ENCODE measurements at regions of chr17 and their contacts with region 1.

Region 1: DNA sequence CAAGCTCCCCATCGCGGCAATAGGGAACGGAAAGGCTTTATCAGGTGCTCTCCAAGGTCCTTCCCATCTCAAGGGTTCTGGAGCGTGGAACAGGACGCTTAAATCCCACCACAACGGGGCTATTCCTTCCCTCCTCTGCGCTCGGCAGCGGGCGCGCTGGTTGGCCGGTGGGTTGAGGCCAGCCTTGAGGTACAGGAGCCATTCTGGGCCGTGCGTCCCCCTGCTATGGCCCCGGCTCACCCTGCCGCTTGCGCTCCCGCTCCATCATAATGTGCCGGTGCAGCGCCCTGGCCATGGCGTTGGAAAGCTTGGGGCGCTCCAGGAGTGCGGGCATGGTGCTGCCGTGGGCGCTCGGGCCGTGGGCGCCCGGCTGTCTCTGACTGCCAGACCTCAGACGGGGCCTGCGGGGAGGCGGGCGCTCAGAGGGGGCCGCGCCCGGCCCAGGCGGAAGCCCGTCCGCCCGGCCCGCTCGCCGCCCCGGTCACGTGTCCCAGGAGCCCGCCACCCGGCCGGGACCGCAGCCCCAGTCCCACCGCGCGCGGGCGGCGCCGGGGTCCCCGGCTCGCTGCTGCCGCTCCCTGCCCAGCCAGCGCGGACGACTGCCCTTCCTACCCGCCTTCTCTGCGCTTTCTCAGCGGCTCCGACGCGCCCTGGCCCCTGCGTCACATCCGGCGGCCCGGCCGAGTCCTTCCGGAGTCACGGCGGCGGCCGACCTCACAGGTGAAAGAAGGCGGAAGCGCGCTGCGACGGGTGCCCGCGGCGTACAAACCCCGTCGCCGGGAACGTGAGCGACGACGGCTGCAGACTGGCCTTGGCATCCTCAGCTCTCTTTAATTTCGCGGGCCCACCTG is at the start of gene GPS2:
- DNase-seq: peak in 1 of 2 experiments; percentile 96
- H3K4me3 ChIP-seq: peak within 1 kb of the TSS; percentile 55 to 95 (median 70)
- H3K27ac ChIP-seq: peak within 1 kb of the TSS; percentile 61; the same call in 1 of the 2 replicates
- H3K4me1 ChIP-seq: peaks cover 0 to 7% (median 4%) of the 10 kb centered on the region in 4 experiments; a peak in 4 of 7 replicates
- H3K27me3 ChIP-seq: no peaks in the 10 kb centered on the region
- CTCF ChIP-seq: no peak
- EP300 ChIP-seq: peak in 1 of 2 experiments; percentile 84; a peak in 1 of 3 replicates
- POLR2A ChIP-seq: peak in 1 of 2 experiments; percentile 87; a peak in 2 of 3 replicates
- RAD21 ChIP-seq: no peak
- total RNA-seq, gene GPS2: 67.0 and 74.8 TPM in 2 replicates

Region 2: DNA sequence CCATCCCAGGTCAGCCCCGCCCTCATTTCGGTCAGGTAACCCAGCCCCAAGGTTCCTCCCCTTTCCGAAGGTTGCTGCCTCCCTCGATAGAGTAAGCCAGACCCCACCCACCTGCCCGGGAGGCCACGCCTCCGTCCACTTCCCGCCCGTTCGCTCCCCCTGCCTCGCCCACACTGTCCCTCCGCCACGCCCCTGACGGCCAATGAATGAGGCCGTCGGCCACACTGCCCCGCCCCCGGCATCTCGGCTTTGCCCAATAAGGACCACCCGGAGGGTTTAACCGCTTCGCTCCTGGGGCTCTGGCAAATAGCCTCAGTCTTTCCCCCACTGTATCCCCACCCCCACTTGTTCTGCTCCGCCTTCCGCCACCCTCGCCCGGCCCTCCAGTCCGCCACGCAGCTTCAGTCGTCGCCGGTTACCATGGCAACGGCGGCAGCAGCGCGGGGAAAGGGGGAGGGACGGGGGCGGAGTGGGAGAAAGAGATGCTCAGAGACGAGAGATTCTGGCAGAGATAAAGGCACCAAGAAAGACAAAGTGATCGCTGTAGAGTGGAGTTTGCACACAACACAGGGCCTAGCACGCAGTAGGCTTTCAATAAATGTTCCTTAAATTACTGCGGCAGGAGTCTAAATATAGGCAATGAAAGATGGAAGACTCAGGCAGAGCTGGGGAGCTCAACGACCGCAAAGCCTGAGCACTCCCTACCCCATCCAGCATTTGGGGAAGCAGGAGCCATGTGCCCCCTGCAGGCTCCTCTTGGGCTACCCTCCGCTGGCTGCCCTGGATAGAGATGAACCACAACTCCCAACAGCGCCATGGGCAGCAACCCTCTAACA is 100.4 kb before region 1 on chr17:
- CTCF ChIA-PET with region 1: interaction called, 4 read pairs
- POLR2A ChIA-PET with region 1: interaction called, 54 read pairs
- DNase-seq: peak; percentile 99 to 100
- H3K4me3 ChIP-seq: peak overlapping the region; percentile 44 to 68 (median 50); a peak in 7 of 8 replicates
- H3K27ac ChIP-seq: peak overlapping the region; percentile 86
- H3K4me1 ChIP-seq: peaks cover 9 to 45% (median 28%) of the 10 kb centered on the region in 4 experiments
- H3K27me3 ChIP-seq: no peaks in the 10 kb centered on the region
- CTCF ChIP-seq: peak; percentile 32 to 76 (median 63)
- EP300 ChIP-seq: peak in 1 of 2 experiments; percentile 7; a peak in 1 of 3 replicates
- POLR2A ChIP-seq: no peak
- RAD21 ChIP-seq: peak; percentile 23; a peak in 2 of 4 replicates

Region 3: DNA sequence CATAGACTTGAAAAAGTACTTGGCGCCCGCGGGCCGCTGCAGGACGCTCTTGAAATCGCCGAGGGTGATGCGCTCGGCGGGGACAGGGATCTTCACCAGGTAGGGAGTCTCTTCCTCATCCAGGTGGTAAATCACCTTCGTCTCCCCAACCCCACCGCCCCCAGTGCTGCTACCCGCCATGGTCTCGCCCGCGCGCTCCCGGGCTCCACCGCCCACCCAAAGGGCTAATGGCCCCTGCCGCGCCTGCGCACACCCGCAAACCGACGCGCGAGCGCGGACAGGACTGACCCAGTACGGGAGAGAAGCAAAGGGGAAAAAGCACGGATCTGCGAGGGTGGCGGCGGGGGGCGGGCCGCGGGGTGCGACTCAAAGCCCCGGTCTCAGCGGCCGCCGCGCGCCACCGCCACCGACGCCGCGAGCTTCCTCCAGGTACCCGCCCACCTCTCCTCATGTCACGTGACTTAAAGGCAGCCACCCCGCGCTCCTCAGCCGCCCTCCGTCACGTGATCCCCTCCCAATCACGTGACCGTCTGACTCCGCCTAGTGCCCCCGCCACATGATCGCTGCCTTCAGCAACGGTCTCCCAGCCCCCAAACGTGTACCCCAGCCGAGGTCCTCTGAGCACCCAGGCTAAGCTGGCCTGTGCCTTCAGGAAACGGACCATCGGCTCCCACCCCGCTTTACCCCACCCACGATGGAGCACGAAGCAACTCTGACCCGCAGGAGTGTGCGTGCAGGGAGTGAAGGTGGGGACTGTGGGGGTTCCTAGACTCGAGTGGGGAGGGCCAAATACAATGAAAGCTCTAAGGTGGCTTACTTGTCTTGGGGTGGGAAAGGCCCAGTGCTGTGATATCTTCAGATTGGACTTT is 80.6 kb before region 1 on chr17 and contains the start of gene DVL2:
- CTCF ChIA-PET with region 1: interaction called, 4 read pairs
- POLR2A ChIA-PET with region 1: interaction called, 22 read pairs
- DNase-seq: peak in 1 of 2 experiments; percentile 95
- H3K4me3 ChIP-seq: peak within 1 kb of the TSS; percentile 68 to 89 (median 80)
- H3K27ac ChIP-seq: peak within 1 kb of the TSS; percentile 71
- H3K4me1 ChIP-seq: peaks cover 3 to 14% (median 6%) of the 10 kb centered on the region in 4 experiments; a peak in 6 of 7 replicates
- H3K27me3 ChIP-seq: no peaks in the 10 kb centered on the region
- CTCF ChIP-seq: no peak
- EP300 ChIP-seq: 0 out of 3 replicates have a peak, but pooled peaks of 1 of the 2 experiments have one; percentile 61
- POLR2A ChIP-seq: peak; percentile 66 to 89
- RAD21 ChIP-seq: no peak; a peak in 1 of 4 replicates
- total RNA-seq, gene DVL2: 59.3 and 59.6 TPM in 2 replicates

Region 4: GRCh38 chr17:7261172-7261927 is 53.6 kb before region 1 on chr17:
- CTCF ChIA-PET with region 1: interaction called, 6 read pairs
- POLR2A ChIA-PET with region 1: interaction called, 159 read pairs
- DNase-seq: peak in 1 of 2 experiments; percentile 86
- H3K4me3 ChIP-seq: peak overlapping the region; percentile 93 to 98 (median 96)
- H3K27ac ChIP-seq: peak overlapping the region; percentile 91
- H3K4me1 ChIP-seq: peaks cover 4 to 15% (median 6%) of the 10 kb centered on the region in 4 experiments; a peak in 6 of 7 replicates
- H3K27me3 ChIP-seq: no peaks in the 10 kb centered on the region
- CTCF ChIP-seq: no peak
- EP300 ChIP-seq: peak in 1 of 2 experiments; percentile 96; a peak in 2 of 3 replicates
- POLR2A ChIP-seq: peak; percentile 72 to 91
- RAD21 ChIP-seq: no peak

Region 5: DNA sequence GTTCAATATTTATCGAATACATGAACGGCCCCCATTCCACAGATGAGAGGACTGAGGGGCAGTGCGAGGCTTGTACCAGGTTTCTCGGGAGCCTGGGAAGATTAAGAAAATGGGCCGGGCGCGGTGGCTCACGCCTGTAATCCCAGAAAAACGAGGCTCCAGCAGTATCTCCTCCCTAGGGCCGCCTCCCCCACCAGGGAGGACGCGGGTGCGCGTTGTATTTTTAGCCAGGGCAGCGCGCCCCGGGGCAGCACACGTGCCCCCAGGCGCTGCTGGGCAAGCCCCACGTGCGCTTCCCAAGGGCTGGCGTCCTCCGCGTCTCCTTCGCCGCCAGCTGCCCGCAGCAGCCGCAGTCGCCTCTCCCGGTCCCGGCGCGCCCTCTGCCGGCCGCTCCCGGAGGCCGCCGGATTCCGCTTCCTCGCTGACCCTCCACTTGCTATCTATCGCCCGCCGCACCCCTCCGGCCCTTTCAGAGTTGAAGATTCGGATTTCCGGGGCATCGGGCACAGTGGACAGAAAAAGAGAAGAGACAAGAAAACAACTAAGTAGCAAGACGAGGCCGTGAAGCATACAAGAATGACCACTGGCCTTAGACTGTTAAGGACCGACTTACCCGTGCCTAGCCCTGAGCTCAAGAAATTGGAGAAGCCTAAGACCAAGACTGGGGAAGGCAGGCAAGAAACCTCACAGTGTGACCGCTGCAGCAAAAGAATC is 18.6 kb before region 1 on chr17:
- CTCF ChIA-PET with region 1: interaction called, 22 read pairs
- POLR2A ChIA-PET with region 1: interaction called, 45 read pairs
- DNase-seq: peak in 1 of 2 experiments; percentile 96
- H3K4me3 ChIP-seq: peak overlapping the region in 1 of 4 experiments; percentile 51; a peak in 2 of 8 replicates
- H3K27ac ChIP-seq: no peak overlapping the region
- H3K4me1 ChIP-seq: peaks cover 0 to 14% (median 5%) of the 10 kb centered on the region in 4 experiments; a peak in 5 of 7 replicates
- H3K27me3 ChIP-seq: peaks cover 3 to 11% (median 9%) of the 10 kb centered on the region in 4 experiments
- CTCF ChIP-seq: peak; percentile 84 to 96 (median 90)
- EP300 ChIP-seq: peak in 1 of 2 experiments; percentile 83; a peak in 2 of 3 replicates
- POLR2A ChIP-seq: no peak
- RAD21 ChIP-seq: peak; percentile 93 to 95

Region 6: GRCh38 chr17:7336240-7337175 is 21.6 kb after region 1 on chr17 and contains the start of gene ACAP1:
- CTCF ChIA-PET with region 1: interaction called, 19 read pairs
- POLR2A ChIA-PET with region 1: interaction called, 223 read pairs
- DNase-seq: peak; percentile 44 to 79
- H3K4me3 ChIP-seq: peak within 1 kb of the TSS in 3 of 4 experiments; percentile 10 to 52 (median 32); a peak in 6 of 8 replicates
- H3K27ac ChIP-seq: peak within 1 kb of the TSS; percentile 51; the same call in 1 of the 2 replicates
- H3K4me1 ChIP-seq: peaks cover 3 to 16% (median 14%) of the 10 kb centered on the region in 4 experiments
- H3K27me3 ChIP-seq: no peaks in the 10 kb centered on the region
- CTCF ChIP-seq: no peak
- EP300 ChIP-seq: peak in 1 of 2 experiments; percentile 52; a peak in 1 of 3 replicates
- POLR2A ChIP-seq: peak in 1 of 2 experiments; percentile 32; a peak in 2 of 3 replicates
- RAD21 ChIP-seq: peak in 1 of 2 experiments; percentile 16; a peak in 1 of 4 replicates
- total RNA-seq, gene ACAP1: 45.1 and 49.2 TPM in 2 replicates

Region 7: GRCh38 chr17:7351665-7352501 is 36.9 kb after region 1 on chr17 and contains the start of gene KCTD11:
- CTCF ChIA-PET with region 1: interaction called, 24 read pairs
- POLR2A ChIA-PET with region 1: interaction called, 91 read pairs
- DNase-seq: peak; percentile 46 to 89
- H3K4me3 ChIP-seq: peak within 1 kb of the TSS; percentile 39 to 96 (median 84)
- H3K27ac ChIP-seq: peak within 1 kb of the TSS; percentile 66; the same call in 1 of the 2 replicates
- H3K4me1 ChIP-seq: peaks cover 0 to 19% (median 10%) of the 10 kb centered on the region in 4 experiments; a peak in 6 of 7 replicates
- H3K27me3 ChIP-seq: no peaks in the 10 kb centered on the region
- CTCF ChIP-seq: peak in 2 of 3 experiments; percentile 70 to 73; a peak in 2 of 4 replicates
- EP300 ChIP-seq: peak in 1 of 2 experiments; percentile 80; a peak in 2 of 3 replicates
- POLR2A ChIP-seq: peak in 1 of 2 experiments; percentile 82; a peak in 2 of 3 replicates
- RAD21 ChIP-seq: peak; percentile 24 to 48; a peak in 3 of 4 replicates
- total RNA-seq, gene KCTD11: 8.7 and 9.2 TPM in 2 replicates

Measured in H1 (cell line).